ENCODE measurements at regions of chr4 and their contacts with region 1.

Region 1: DNA sequence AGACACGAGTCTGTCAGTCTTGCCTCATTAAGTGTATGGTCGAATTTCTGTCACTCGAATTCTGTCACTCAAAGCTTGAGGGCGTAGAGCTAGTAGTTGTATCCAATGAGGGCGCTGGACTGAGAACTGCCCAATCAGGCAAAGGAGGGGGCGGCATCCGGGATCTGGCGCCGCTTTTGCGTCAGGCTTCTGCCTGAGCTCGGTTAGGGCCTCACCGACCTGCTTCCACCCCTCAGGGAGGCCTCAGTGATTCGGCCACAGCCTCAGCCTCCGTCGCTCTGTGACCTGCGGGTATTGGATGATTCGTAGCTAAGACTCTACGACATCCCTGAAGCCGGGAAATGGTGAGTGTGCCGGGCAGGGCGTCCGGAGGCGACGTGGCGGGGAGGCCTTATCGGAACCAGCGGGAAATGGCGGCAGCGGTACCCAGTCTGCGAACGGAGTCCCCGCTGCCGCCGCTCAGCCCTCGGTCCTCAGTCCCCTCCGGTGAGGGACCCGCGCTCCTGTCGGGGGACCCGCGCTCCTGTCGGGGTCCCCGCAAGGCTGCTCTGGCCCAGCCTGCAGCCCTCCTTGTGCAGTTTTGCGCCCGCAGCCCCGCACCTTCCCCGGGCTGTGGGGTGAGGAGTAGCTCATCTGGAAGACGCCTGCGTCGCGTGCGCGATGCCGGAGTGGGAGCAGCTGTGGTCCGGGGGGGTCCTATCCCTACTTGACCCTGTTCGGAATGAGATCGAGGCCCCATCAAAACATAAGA is 88.3 kb downstream of the ZNF718 start:
- DNase-seq: peak; percentile 77
- H3K4me3 ChIP-seq: peak overlapping the region in 2 of 3 experiments; percentile 36 to 46
- H3K27ac ChIP-seq: no peak overlapping the region
- H3K4me1 ChIP-seq: no peaks in the 10 kb centered on the region
- H3K27me3 ChIP-seq: no peaks in the 10 kb centered on the region
- CTCF ChIP-seq: no peak

Region 2: GRCh38 chr4:188076-188475 is 24.5 kb before region 1 on chr4:
- CTCF ChIA-PET with region 1: interaction called, 11 read pairs
- dilution Hi-C with region 1: loop called (anchors 5 kb)
- in situ Hi-C with region 1: no loop called
- intact Hi-C with region 1: no loop called
- DNase-seq: no peak
- H3K4me3 ChIP-seq: no peak overlapping the region
- H3K27ac ChIP-seq: no peak overlapping the region
- H3K4me1 ChIP-seq: no peaks in the 10 kb centered on the region
- H3K27me3 ChIP-seq: no peaks in the 10 kb centered on the region
- CTCF ChIP-seq: no peak